Activated CD4-positive, alpha-beta T cell treated with anti-CD3 and anti-CD28 coated beads for 36 hours (primary cell): ENCODE measurements at regions of chr20 and their contacts with region 1.

Region 1: GRCh38 chr20:45406259-45407066 is 1.6 kb upstream of the DBNDD2 start:
- DNase-seq: peak; percentile 69
- ATAC-seq: peak; percentile 51
- H3K4me3 Mint-ChIP-seq: peak overlapping the region; percentile 73
- H3K27ac Mint-ChIP-seq: peak overlapping the region; percentile 69
- H3K4me1 Mint-ChIP-seq: peaks cover 22% of the 10 kb centered on the region
- H3K27me3 Mint-ChIP-seq: peaks cover 3% of the 10 kb centered on the region

Region 2: DNA sequence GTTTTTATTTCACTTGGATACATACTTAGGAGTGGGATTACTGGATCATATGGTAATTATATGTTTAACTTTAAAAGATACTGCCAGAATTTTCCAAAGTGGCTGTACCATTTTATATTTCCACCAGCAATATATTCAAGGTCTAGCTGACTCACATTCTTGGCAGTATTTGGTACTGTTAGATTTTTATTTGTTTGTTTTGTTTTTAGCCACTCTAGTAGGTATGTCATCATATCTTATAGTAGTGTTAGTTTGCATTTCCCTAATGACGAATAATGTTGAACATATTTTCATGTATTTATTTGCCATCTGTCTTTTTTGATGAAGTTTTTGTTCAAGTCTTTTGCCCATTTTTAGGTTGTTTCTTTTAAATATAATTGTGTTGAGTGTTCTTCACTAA is 23.3 kb before region 1 on chr20:
- CTCF ChIA-PET with region 1: no interaction called
- POLR2A ChIA-PET with region 1: no interaction called
- intact Hi-C with region 1: no loop called
- DNase-seq: no peak
- ATAC-seq: no peak
- H3K4me3 Mint-ChIP-seq: no peak overlapping the region
- H3K27ac Mint-ChIP-seq: no peak overlapping the region
- H3K4me1 Mint-ChIP-seq: peaks cover 10% of the 10 kb centered on the region
- H3K27me3 Mint-ChIP-seq: no peaks in the 10 kb centered on the region

Region 3: DNA sequence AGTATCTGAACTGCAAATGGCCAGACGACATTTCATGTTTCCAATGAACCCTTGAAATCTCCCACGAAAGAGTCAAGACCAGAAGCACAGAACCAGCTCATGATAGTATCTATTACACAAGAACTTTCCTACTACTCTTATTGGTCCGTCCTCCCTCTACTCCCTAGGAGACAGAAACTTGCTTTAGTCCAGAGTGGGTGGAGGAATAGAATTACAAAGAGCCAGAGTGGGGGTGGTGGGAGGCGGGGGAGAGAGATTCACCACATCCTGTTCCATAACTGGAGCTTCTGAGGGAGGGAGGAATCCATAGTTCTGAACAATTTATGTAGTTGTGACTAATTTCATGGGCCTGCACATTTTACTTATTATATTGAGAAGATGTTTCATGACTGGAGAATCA is 204.6 kb after region 1 on chr20:
- CTCF ChIA-PET with region 1: no interaction called
- POLR2A ChIA-PET with region 1: no interaction called
- intact Hi-C with region 1: loop called in 1 of 2 experiments (anchors 1 kb)
- DNase-seq: peak; percentile 79
- ATAC-seq: peak; percentile 93
- H3K4me3 Mint-ChIP-seq: no peak overlapping the region
- H3K27ac Mint-ChIP-seq: peak overlapping the region; percentile 47
- H3K4me1 Mint-ChIP-seq: peaks cover 23% of the 10 kb centered on the region
- H3K27me3 Mint-ChIP-seq: peaks cover 26% of the 10 kb centered on the region

Region 4: GRCh38 chr20:45646875-45647274 is 240.4 kb after region 1 on chr20:
- CTCF ChIA-PET with region 1: no interaction called
- POLR2A ChIA-PET with region 1: no interaction called
- intact Hi-C with region 1: no loop called
- DNase-seq: no peak
- ATAC-seq: no peak
- H3K4me3 Mint-ChIP-seq: no peak overlapping the region
- H3K27ac Mint-ChIP-seq: no peak overlapping the region
- H3K4me1 Mint-ChIP-seq: no peaks in the 10 kb centered on the region
- H3K27me3 Mint-ChIP-seq: peaks cover 7% of the 10 kb centered on the region